ENCODE measurements at regions of chr10 and their contacts with region 1.

Region 1: DNA sequence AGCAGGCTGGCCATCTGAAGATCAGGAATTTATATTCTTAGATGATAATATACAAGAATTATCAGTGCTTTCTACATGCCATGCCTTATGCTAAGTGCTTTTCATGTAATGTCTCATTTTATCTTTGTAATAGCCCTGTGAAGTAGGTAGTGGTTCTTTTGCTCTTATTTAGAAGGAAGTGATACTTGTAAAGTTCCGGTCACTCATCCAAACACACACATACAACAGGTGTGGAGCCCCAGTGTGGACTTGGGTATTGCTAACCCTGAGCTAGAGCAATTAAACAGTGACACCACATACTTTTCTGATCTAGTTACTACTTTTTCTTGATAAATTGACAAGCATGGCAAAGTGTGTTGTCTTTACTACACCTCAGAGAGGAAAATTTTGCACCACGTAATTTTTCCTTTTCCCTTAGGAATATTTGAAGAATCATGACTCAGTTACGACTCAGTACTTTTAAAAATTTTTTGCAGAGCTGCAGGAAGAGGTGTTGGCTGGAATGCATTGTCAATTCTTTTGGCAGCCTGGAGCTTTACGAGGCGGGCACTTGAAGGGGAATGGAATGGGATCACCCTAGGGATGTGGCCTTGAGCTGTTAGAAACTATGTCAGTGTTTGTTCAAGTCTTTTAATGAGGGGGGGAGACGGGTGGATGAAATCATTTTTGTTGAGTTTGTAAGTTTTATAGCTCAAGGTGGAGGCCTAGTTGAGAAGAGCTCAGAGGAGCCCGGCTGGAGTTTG is 212.5 kb upstream of the CELF2 start:
- DNase-seq: no peak
- H3K4me3 ChIP-seq: no peak overlapping the region
- H3K27ac ChIP-seq: no peak overlapping the region
- H3K4me1 ChIP-seq: no peaks in the 10 kb centered on the region
- H3K27me3 ChIP-seq: no peaks in the 10 kb centered on the region
- CTCF ChIP-seq: no peak
- POLR2A ChIP-seq: no peak

Region 2: GRCh38 chr10:11017570-11018431 is 212.6 kb after region 1 on chr10 and contains the start of gene CELF2:
- intact Hi-C with region 1: loop called (anchors 10 kb)
- DNase-seq: peak; percentile 45
- H3K4me3 ChIP-seq: peak within 1 kb of the TSS; percentile 61 to 62
- H3K27ac ChIP-seq: peak within 1 kb of the TSS; percentile 53 to 55
- H3K4me1 ChIP-seq: no peaks in the 10 kb centered on the region
- H3K27me3 ChIP-seq: no peaks in the 10 kb centered on the region
- CTCF ChIP-seq: no peak
- POLR2A ChIP-seq: no peak
- total RNA-seq, gene CELF2: 19.2 to 43.2 TPM

Measured in prostate gland (tissue), 2 donors.